Naive thymus-derived CD4-positive, alpha-beta T cell (primary cell): ENCODE measurements at regions of chrX and their contacts with region 1.

Region 1: GRCh38 chrX:110847334-110847733 is 51.7 kb upstream of the CHRDL1 start:
- DNase-seq: peak in 6 of 9 donors; percentile 15 to 53 (median 44)
- ATAC-seq: peak; percentile 61
- H3K4me3 ChIP-seq: no peak overlapping the region
- H3K4me3 Mint-ChIP-seq: no peak overlapping the region
- H3K27ac ChIP-seq: no peak overlapping the region
- H3K27ac Mint-ChIP-seq: peak overlapping the region in 1 of 9 donors; percentile 75
- H3K4me1 ChIP-seq: no peaks in the 10 kb centered on the region
- H3K4me1 Mint-ChIP-seq: peaks cover 0 to 2% (median 0%) of the 10 kb centered on the region in 7 donors
- H3K27me3 ChIP-seq: no peaks in the 10 kb centered on the region
- H3K27me3 Mint-ChIP-seq: peaks cover 0 to 5% (median 0%) of the 10 kb centered on the region in 5 donors

Region 2: GRCh38 chrX:110167952-110168451 is 679.3 kb before region 1 on chrX:
- CTCF ChIA-PET with region 1: no interaction called
- POLR2A ChIA-PET with region 1: no interaction called
- intact Hi-C with region 1: loop called in 1 of 2 experiments (anchors 5 kb)
- DNase-seq: peak; percentile 9 to 53 (median 32)
- ATAC-seq: peak; percentile 63
- H3K4me3 ChIP-seq: no peak overlapping the region
- H3K4me3 Mint-ChIP-seq: no peak overlapping the region
- H3K27ac ChIP-seq: no peak overlapping the region
- H3K27ac Mint-ChIP-seq: no peak overlapping the region
- H3K4me1 ChIP-seq: no peaks in the 10 kb centered on the region
- H3K4me1 Mint-ChIP-seq: peaks cover 0 to 7% (median 0%) of the 10 kb centered on the region in 7 donors
- H3K27me3 ChIP-seq: no peaks in the 10 kb centered on the region
- H3K27me3 Mint-ChIP-seq: no peaks in the 10 kb centered on the region

Region 3: GRCh38 chrX:111244235-111244750 is 397.0 kb after region 1 on chrX:
- CTCF ChIA-PET with region 1: no interaction called
- POLR2A ChIA-PET with region 1: no interaction called
- intact Hi-C with region 1: loop called in 1 of 2 experiments (anchors 5 kb)
- DNase-seq: no peak
- ATAC-seq: no peak
- H3K4me3 ChIP-seq: no peak overlapping the region
- H3K4me3 Mint-ChIP-seq: no peak overlapping the region
- H3K27ac ChIP-seq: no peak overlapping the region
- H3K27ac Mint-ChIP-seq: no peak overlapping the region
- H3K4me1 ChIP-seq: no peaks in the 10 kb centered on the region
- H3K4me1 Mint-ChIP-seq: no peaks in the 10 kb centered on the region
- H3K27me3 ChIP-seq: no peaks in the 10 kb centered on the region
- H3K27me3 Mint-ChIP-seq: peaks cover 0 to 2% (median 0%) of the 10 kb centered on the region in 5 donors